ENCODE measurements at regions of chr17 and their contacts with region 1.

Region 1: GRCh38 chr17:45852535-45853297 is 8.0 kb downstream of the SPPL2C start:
- DNase-seq: no peak
- H3K4me3 ChIP-seq: no peak overlapping the region
- CTCF ChIP-seq: peak; percentile 79

Region 2: DNA sequence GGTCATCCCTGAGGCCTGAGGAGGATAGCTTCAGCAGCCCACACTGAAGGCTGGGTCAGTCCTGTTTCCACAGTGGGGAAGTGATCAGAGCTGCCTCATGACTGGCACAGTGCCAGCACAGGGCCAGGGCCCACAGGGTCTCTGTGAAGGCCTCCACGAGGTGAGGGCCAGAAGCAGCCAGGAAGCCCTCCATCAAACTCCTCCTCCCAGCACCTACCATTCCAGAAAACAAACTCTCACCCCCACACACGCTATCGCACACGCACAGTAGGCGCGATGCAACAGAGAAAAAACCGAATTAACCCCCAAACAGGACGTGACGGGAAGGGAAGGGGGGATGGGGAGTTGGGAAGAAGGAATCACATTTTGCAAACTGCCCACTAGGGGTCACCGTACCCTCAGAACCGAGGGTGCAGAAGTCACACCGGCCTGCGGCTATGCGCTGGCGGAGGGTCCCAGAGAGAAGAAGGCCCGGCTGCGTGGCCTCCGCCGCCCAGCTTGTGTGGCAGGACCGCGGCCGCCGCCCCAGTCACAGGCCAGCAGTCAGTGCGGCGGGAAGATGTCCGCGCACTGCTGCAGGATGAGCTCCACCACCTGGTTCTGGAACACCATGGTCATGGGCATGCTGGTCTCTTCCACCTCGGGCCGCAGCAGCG is 457.7 kb before region 1 on chr17:
- CTCF ChIA-PET with region 1: interaction called, 10 read pairs
- POLR2A ChIA-PET with region 1: no interaction called
- DNase-seq: no peak
- H3K4me3 ChIP-seq: peak overlapping the region; percentile 51
- CTCF ChIP-seq: peak; percentile 81

Region 3: DNA sequence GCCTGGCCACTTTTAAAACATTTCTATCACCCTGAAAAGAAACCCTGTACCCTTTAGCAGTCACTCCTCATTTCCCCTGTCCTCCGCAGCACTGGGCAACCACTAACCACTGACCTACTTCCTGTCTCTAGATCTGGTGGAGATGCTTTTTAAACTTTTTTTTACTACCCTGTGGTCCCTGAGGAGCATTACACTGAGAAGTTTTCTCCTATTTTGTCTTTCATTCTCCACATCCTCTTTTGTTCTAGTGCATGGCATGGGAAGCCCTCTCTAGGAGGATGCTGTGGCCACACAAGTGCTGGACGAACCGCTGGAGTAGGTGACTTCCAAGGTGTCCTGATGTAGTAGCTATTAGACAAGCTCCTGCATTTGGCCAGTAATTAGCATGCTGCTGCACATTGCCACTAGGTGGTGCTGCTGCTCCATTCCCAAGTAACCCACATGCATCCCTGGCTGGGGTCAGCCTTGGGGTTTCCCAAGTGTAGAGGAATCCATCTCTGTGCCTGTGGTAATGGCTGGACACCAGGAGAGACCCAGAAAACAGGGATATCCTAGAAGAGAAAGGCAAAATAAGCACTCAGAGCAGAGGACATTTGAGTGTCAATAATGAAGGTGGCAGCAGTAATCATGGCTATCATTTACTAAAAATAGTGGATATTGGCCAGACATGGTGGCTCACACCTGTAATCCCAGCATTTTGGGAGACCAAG is 212.4 kb before region 1 on chr17:
- CTCF ChIA-PET with region 1: interaction called, 43 read pairs
- POLR2A ChIA-PET with region 1: no interaction called
- DNase-seq: peak; percentile 3
- H3K4me3 ChIP-seq: no peak overlapping the region
- CTCF ChIP-seq: peak; percentile 92

Region 4: GRCh38 chr17:45834471-45835396 is 18.0 kb before region 1 on chr17:
- CTCF ChIA-PET with region 1: interaction called, 24 read pairs
- POLR2A ChIA-PET with region 1: no interaction called
- DNase-seq: no peak
- H3K4me3 ChIP-seq: no peak overlapping the region
- CTCF ChIP-seq: no peak